ENCODE measurements at regions of chr2 and their contacts with region 1.

Region 1: GRCh38 chr2:198657512-198658121 is 800.1 kb downstream of the SATB2 start:
- DNase-seq: peak; percentile 50
- H3K4me3 Mint-ChIP-seq: no peak overlapping the region
- H3K27ac Mint-ChIP-seq: no peak overlapping the region
- H3K4me1 Mint-ChIP-seq: no peaks in the 10 kb centered on the region
- H3K27me3 Mint-ChIP-seq: no peaks in the 10 kb centered on the region
- CTCF ChIP-seq: peak; percentile 60

Region 2: GRCh38 chr2:198374375-198375082 is 283.1 kb before region 1 on chr2:
- CTCF ChIA-PET with region 1: no interaction called
- intact Hi-C with region 1: loop called (anchors 5 kb)
- DNase-seq: peak; percentile 52
- H3K4me3 Mint-ChIP-seq: no peak overlapping the region
- H3K27ac Mint-ChIP-seq: no peak overlapping the region
- H3K4me1 Mint-ChIP-seq: no peaks in the 10 kb centered on the region
- H3K27me3 Mint-ChIP-seq: no peaks in the 10 kb centered on the region
- CTCF ChIP-seq: peak; percentile 71

Region 3: DNA sequence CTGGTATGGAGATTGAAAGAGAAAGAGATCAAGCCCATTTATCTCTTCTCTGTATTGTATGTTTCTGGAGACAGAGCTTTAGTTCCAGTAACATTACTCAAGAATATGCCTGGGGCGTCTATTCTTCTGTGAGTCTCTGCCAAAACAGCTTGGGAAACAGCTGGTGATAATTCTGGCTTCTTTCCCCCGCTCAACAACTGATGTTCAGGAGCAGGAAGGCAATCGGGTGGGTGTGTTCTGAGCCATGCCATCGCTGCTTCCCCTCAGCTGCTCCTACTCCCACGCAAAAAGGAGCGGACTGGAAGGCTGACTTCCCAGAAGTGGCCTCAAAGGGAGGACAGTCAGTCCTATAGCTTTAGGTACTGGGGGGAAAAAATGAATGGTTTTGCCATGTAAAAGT is 158.1 kb before region 1 on chr2:
- CTCF ChIA-PET with region 1: no interaction called
- intact Hi-C with region 1: no loop called
- DNase-seq: no peak
- H3K4me3 Mint-ChIP-seq: no peak overlapping the region
- H3K27ac Mint-ChIP-seq: no peak overlapping the region
- H3K4me1 Mint-ChIP-seq: no peaks in the 10 kb centered on the region
- H3K27me3 Mint-ChIP-seq: no peaks in the 10 kb centered on the region
- CTCF ChIP-seq: no peak

Region 4: GRCh38 chr2:198731842-198732399 is 74.3 kb after region 1 on chr2:
- CTCF ChIA-PET with region 1: no interaction called
- intact Hi-C with region 1: no loop called
- DNase-seq: no peak
- H3K4me3 Mint-ChIP-seq: no peak overlapping the region
- H3K27ac Mint-ChIP-seq: no peak overlapping the region
- H3K4me1 Mint-ChIP-seq: no peaks in the 10 kb centered on the region
- H3K27me3 Mint-ChIP-seq: no peaks in the 10 kb centered on the region
- CTCF ChIP-seq: no peak

Region 5: GRCh38 chr2:198968545-198968944 is 310.9 kb after region 1 on chr2:
- CTCF ChIA-PET with region 1: no interaction called
- intact Hi-C with region 1: loop called (anchors 1 kb)
- DNase-seq: no peak
- H3K4me3 Mint-ChIP-seq: no peak overlapping the region
- H3K27ac Mint-ChIP-seq: no peak overlapping the region
- H3K4me1 Mint-ChIP-seq: peaks cover 9% of the 10 kb centered on the region
- H3K27me3 Mint-ChIP-seq: no peaks in the 10 kb centered on the region
- CTCF ChIP-seq: no peak

Region 6: GRCh38 chr2:199258291-199258690 is 600.7 kb after region 1 on chr2:
- CTCF ChIA-PET with region 1: no interaction called
- intact Hi-C with region 1: loop called (anchors 10 kb)
- DNase-seq: peak; percentile 6
- H3K4me3 Mint-ChIP-seq: no peak overlapping the region
- H3K27ac Mint-ChIP-seq: no peak overlapping the region
- H3K4me1 Mint-ChIP-seq: peaks cover 10% of the 10 kb centered on the region
- H3K27me3 Mint-ChIP-seq: no peaks in the 10 kb centered on the region
- CTCF ChIP-seq: no peak

Region 7: DNA sequence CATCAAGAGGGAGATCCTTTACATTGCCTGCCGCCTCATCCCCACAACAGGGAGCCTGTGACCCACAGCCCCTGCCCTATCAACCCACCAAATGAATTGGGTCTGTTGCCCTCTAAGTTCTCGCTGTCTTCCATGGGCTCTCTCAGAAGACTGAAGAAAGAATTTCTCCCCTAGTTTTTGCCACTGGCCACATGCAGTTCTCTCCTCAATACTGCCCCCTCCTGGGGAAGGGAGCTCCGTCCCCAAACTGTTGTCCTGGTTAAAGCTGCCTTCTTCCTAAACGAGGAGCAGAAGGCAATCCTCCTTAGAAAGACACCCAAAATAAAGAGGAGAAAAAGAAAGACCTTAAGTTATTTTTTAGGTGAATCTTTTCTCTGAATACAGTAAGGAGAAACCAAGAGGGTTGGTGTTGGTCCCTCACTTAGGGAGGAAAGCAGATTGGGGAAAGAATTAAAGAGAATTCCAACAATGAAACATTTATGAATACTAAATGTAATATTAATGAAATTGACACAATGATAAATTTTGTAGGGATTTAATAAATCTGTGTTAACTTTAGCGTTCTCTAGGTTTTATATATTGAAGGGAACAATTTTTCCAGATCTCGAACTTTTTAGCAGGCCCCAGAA is 831.3 kb after region 1 on chr2:
- CTCF ChIA-PET with region 1: interaction called, 12 read pairs
- intact Hi-C with region 1: loop called (anchors 1 kb)
- DNase-seq: peak; percentile 85
- H3K4me3 Mint-ChIP-seq: no peak overlapping the region
- H3K27ac Mint-ChIP-seq: no peak overlapping the region
- H3K4me1 Mint-ChIP-seq: no peaks in the 10 kb centered on the region
- H3K27me3 Mint-ChIP-seq: no peaks in the 10 kb centered on the region
- CTCF ChIP-seq: peak; percentile 78